Activated CD4-positive, alpha-beta T cell treated with anti-CD3 and anti-CD28 coated beads, Interleukin-2, amount 10 ng/mL, durations not matched to agents 7 days and 5 days (primary cell): ENCODE measurements at regions of chr5 and their contacts with region 1.

Region 1: DNA sequence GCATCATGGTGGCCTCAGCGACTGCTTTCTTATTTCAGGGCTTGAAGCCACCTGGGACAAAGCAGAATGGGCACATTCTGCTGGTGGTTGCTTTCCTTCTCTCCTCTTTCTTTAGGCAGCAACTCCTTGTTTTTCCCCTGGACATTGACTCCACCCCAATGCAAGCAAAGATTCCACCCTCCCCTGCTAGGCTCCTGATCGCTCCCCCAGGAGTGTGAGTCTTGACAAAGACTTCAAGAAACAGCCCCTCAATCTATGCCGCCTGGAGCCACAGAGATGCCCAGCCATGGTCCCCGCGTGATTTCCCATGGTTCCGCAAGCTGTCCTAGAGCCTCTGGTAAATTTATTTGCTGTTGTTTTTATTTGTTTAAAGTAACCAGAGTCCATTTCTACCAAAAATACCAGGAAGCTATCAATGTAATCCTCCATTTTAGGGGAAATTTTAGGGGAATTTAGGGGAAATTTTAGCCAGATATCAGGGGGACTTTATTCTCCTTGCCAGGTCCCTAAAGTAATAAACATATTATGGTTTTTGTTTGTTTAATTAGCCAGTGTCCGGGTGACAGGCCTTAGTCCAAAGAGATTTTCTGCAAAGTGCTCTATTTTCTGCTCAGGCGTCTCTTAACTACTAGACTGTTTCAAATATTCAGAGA is 2.3 kb downstream of the KCNMB1 start:
- DNase-seq: no peak
- H3K4me3 Mint-ChIP-seq: no peak overlapping the region
- H3K27ac Mint-ChIP-seq: no peak overlapping the region
- H3K4me1 Mint-ChIP-seq: peaks cover 9% of the 10 kb centered on the region
- H3K27me3 Mint-ChIP-seq: peaks cover 15% of the 10 kb centered on the region

Region 2: GRCh38 chr5:170404402-170404801 is 17.5 kb after region 1 on chr5:
- CTCF ChIA-PET with region 1: no interaction called
- POLR2A ChIA-PET with region 1: interaction called, 10 read pairs
- DNase-seq: no peak
- H3K4me3 Mint-ChIP-seq: no peak overlapping the region
- H3K27ac Mint-ChIP-seq: no peak overlapping the region
- H3K4me1 Mint-ChIP-seq: no peaks in the 10 kb centered on the region
- H3K27me3 Mint-ChIP-seq: peaks cover 4% of the 10 kb centered on the region